ENCODE measurements at regions of chr12 and their contacts with region 1.

Region 1: GRCh38 chr12:26126340-26127284 is 1.8 kb upstream of the BHLHE41 start:
- DNase-seq: peak; percentile 75 to 97
- H3K4me3 ChIP-seq: peak overlapping the region; percentile 26
- CTCF ChIP-seq: no peak
- POLR2A ChIP-seq: no peak

Region 2: DNA sequence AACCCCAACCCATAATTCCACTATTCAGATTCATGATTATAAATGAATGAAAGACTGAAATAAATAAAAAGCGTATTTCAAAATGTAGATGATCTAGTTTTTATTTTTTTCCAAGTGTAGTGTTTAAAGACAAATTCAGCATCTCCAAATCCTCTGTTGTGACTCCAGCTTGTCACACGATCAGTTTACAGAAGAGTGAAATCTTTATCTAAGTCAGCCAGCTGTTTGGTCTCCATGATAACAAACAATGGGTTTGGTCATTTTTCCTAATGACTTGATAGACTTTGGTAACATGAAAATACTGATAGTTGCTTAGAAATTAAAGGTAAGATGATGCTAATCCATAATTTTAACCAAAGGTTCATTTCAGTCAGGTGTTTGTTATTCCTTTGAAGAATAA is 282.6 kb before region 1 on chr12:
- intact Hi-C with region 1: no loop called
- DNase-seq: no peak
- H3K4me3 ChIP-seq: no peak overlapping the region
- CTCF ChIP-seq: no peak
- POLR2A ChIP-seq: no peak

Region 3: GRCh38 chr12:26077915-26078702 is 48.5 kb before region 1 on chr12:
- intact Hi-C with region 1: no loop called
- DNase-seq: no peak
- H3K4me3 ChIP-seq: no peak overlapping the region
- CTCF ChIP-seq: no peak
- POLR2A ChIP-seq: no peak

Region 4: DNA sequence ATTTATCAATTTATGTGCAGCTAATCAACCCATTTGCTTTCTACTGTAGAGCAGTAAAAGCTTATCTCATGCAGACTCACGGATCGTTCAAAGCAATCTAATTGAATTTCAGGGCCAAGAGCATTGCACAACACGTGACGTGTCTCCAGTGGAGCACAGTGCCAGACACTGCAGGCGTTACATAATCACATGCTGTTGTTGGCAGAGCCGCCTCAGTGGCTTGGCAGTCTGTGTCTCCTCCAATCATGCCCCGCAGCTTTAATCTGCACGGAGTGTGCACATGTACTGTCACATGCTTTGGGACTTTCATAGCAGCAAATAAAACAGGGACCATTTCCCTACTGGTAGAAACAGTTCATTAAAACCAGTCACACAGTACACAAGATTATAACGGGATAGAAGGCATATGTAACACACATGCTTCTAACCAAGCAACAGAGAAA is 397.1 kb after region 1 on chr12:
- intact Hi-C with region 1: loop called (anchors 10 kb)
- DNase-seq: peak; percentile 94 to 97
- H3K4me3 ChIP-seq: no peak overlapping the region
- CTCF ChIP-seq: no peak
- POLR2A ChIP-seq: no peak

Measured in lower leg skin (tissue), 4 donors.